K562 (cell line): ENCODE measurements at regions of chr3 and their contacts with region 1.

Region 1: GRCh38 chr3:170585008-170585936 is 603 bp downstream of the SLC7A14 start:
- DNase-seq: no peak
- ATAC-seq: no peak
- H3K4me3 ChIP-seq: no peak overlapping the region
- H3K27ac ChIP-seq: no peak overlapping the region
- H3K4me1 ChIP-seq: peaks cover 0 to 16% of the 10 kb centered on the region in 2 experiments; a peak in 2 of 5 replicates
- H3K27me3 ChIP-seq: no peaks in the 10 kb centered on the region; a peak in 1 of 5 replicates
- CTCF ChIP-seq: no peak
- EP300 ChIP-seq: no peak
- POLR2A ChIP-seq: no peak
- RAD21 ChIP-seq: no peak

Region 2: GRCh38 chr3:169650503-169650902 is 934.8 kb before region 1 on chr3:
- CTCF ChIA-PET with region 1: no interaction called
- POLR2A ChIA-PET with region 1: no interaction called
- in situ Hi-C with region 1: no loop called
- intact Hi-C with region 1: no loop called
- DNase-seq: no peak
- ATAC-seq: no peak
- H3K4me3 ChIP-seq: no peak overlapping the region
- H3K27ac ChIP-seq: no peak overlapping the region
- H3K4me1 ChIP-seq: no peaks in the 10 kb centered on the region
- H3K27me3 ChIP-seq: no peaks in the 10 kb centered on the region; a peak in 2 of 5 replicates
- CTCF ChIP-seq: no peak
- EP300 ChIP-seq: no peak
- POLR2A ChIP-seq: no peak
- RAD21 ChIP-seq: no peak

Region 3: DNA sequence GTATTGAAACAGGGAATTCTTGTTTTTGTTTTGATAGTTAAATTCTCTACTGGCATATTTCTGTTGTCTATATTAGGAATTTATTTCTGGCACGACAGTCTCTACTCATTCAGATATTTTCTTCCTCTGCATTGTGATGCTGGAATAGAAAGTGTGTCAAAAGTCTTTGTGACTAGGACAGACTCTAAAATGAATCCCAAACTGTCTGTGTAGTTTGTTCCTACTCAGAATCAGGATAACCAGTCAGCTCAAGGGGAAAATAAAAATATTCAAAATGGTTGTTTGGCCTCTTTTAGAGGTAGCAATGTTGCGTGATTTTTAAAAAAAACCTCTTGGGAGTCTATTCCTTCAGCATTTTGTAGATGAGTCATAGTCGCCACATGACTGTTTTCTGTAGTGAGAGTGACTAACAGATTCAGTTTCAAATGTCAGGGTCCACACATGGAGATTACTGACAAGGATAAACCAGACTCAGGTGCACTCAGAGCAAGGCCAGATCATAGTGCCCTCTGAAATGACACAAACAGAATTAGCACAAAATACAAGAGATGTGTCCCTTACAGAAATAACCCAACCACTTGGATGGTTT is 12.5 kb before region 1 on chr3:
- CTCF ChIA-PET with region 1: no interaction called
- POLR2A ChIA-PET with region 1: interaction called, 10 read pairs
- in situ Hi-C with region 1: no loop called
- intact Hi-C with region 1: no loop called
- DNase-seq: peak in 2 of 4 experiments; percentile 7 to 64
- ATAC-seq: no peak; the same call in 2 of the 3 replicates
- H3K4me3 ChIP-seq: no peak overlapping the region
- H3K27ac ChIP-seq: no peak overlapping the region
- H3K4me1 ChIP-seq: no peaks in the 10 kb centered on the region
- H3K27me3 ChIP-seq: no peaks in the 10 kb centered on the region
- CTCF ChIP-seq: no peak
- EP300 ChIP-seq: peak; percentile 57; the same call in 1 of the 2 replicates
- POLR2A ChIP-seq: no peak
- RAD21 ChIP-seq: no peak